ENCODE measurements at regions of chr17 and their contacts with region 1.

Region 1: GRCh38 chr17:20997711-20998570 is 44.9 kb downstream of the USP22 start:
- DNase-seq: peak in 2 of 4 donors; percentile 11 to 13
- ATAC-seq: no peak
- H3K4me3 ChIP-seq: no peak overlapping the region
- H3K27ac ChIP-seq: no peak overlapping the region
- H3K4me1 ChIP-seq: peaks cover 4% of the 10 kb centered on the region
- H3K27me3 ChIP-seq: no peaks in the 10 kb centered on the region
- CTCF ChIP-seq: no peak
- POLR2A ChIP-seq: no peak

Region 2: DNA sequence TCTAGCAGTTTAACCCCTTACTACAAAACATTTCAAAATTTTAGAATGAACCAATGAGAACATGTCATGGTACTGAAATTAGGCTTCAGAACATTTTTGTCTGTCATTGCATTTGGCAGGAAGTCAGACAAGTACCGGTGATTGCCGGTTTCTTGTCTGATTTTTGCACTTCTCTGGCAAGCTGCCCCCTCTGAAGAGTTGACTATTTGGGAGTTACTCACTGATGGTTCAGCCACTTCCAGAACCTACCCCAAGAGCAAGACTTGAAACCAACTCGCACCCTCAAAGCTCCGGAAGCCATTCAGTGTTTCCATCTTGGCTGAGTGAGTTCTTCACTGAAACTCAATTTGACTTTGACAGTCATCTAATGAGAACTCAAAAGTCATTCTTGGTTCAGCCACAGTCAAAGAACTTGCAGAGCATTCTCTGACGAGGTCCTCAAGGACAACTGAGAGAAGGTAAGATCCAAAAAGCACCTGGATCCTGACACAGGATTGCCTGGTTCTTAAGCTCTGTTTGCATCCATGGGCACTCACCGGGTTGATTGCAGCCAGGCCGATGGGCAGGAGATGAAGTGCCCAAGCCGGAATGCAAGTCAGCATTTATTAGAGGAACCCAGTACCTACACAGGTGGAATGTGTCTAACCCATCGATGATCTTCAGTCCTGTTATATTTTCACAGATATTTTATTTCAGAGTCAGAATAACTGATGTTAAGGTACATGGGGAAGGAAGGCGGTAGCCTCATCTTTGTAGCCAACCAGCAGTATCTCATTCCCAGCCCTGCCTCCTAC is 48.8 kb before region 1 on chr17:
- intact Hi-C with region 1: loop called (anchors 5 kb)
- DNase-seq: no peak
- ATAC-seq: no peak
- H3K4me3 ChIP-seq: no peak overlapping the region
- H3K27ac ChIP-seq: no peak overlapping the region
- H3K4me1 ChIP-seq: peaks cover 4% of the 10 kb centered on the region
- H3K27me3 ChIP-seq: no peaks in the 10 kb centered on the region
- CTCF ChIP-seq: no peak
- POLR2A ChIP-seq: no peak

Region 3: GRCh38 chr17:21089145-21089544 is 91.2 kb after region 1 on chr17:
- intact Hi-C with region 1: no loop called
- DNase-seq: no peak
- ATAC-seq: no peak
- H3K4me3 ChIP-seq: no peak overlapping the region
- H3K27ac ChIP-seq: no peak overlapping the region
- H3K4me1 ChIP-seq: no peaks in the 10 kb centered on the region
- H3K27me3 ChIP-seq: no peaks in the 10 kb centered on the region
- CTCF ChIP-seq: no peak
- POLR2A ChIP-seq: no peak

Measured in body of pancreas (tissue), 4 donors.